A673 (cell line): ENCODE measurements at regions of chr9 and their contacts with region 1.

Region 1: GRCh38 chr9:14271093-14271673 is 42.8 kb downstream of the NFIB start:
- DNase-seq: peak; percentile 74
- H3K4me3 ChIP-seq: peak overlapping the region; percentile 16
- H3K27ac ChIP-seq: no peak overlapping the region
- H3K4me1 ChIP-seq: peaks cover 48% of the 10 kb centered on the region
- H3K27me3 ChIP-seq: no peaks in the 10 kb centered on the region
- CTCF ChIP-seq: no peak

Region 2: DNA sequence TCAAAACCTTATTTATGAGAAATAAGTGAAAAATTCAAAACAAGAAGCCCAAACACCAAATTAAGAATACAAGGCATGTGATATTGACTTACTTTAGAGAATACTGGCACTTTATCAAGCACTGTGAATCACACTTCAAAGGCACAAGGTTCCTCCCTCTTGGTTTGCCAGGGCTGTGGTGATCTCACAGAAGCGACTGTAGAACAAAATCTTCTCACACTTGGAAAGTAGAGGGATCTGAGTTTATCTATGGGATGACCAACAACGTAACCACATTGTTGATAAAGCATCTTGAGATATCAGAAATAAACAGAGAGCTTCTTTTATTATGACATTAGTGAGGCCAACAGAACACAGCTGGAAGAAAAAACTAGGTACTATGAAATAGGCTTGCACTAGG is 253.1 kb before region 1 on chr9:
- CTCF ChIA-PET with region 1: no interaction called
- POLR2A ChIA-PET with region 1: no interaction called
- intact Hi-C with region 1: no loop called
- DNase-seq: no peak
- H3K4me3 ChIP-seq: no peak overlapping the region
- H3K27ac ChIP-seq: no peak overlapping the region
- H3K4me1 ChIP-seq: no peaks in the 10 kb centered on the region
- H3K27me3 ChIP-seq: no peaks in the 10 kb centered on the region
- CTCF ChIP-seq: no peak

Region 3: GRCh38 chr9:14156046-14156445 is 115.1 kb before region 1 on chr9:
- CTCF ChIA-PET with region 1: no interaction called
- POLR2A ChIA-PET with region 1: interaction called, 21 read pairs
- intact Hi-C with region 1: no loop called
- DNase-seq: no peak
- H3K4me3 ChIP-seq: no peak overlapping the region
- H3K27ac ChIP-seq: no peak overlapping the region
- H3K4me1 ChIP-seq: peaks cover 14% of the 10 kb centered on the region
- H3K27me3 ChIP-seq: no peaks in the 10 kb centered on the region
- CTCF ChIP-seq: no peak

Region 4: GRCh38 chr9:14245901-14246525 is 25.2 kb before region 1 on chr9:
- CTCF ChIA-PET with region 1: no interaction called
- POLR2A ChIA-PET with region 1: interaction called, 10 read pairs
- intact Hi-C with region 1: no loop called
- DNase-seq: no peak
- H3K4me3 ChIP-seq: no peak overlapping the region
- H3K27ac ChIP-seq: no peak overlapping the region
- H3K4me1 ChIP-seq: peaks cover 26% of the 10 kb centered on the region
- H3K27me3 ChIP-seq: no peaks in the 10 kb centered on the region
- CTCF ChIP-seq: no peak